HAP-1 (cell line): ENCODE measurements at regions of chr11 and their contacts with region 1.

Region 1: DNA sequence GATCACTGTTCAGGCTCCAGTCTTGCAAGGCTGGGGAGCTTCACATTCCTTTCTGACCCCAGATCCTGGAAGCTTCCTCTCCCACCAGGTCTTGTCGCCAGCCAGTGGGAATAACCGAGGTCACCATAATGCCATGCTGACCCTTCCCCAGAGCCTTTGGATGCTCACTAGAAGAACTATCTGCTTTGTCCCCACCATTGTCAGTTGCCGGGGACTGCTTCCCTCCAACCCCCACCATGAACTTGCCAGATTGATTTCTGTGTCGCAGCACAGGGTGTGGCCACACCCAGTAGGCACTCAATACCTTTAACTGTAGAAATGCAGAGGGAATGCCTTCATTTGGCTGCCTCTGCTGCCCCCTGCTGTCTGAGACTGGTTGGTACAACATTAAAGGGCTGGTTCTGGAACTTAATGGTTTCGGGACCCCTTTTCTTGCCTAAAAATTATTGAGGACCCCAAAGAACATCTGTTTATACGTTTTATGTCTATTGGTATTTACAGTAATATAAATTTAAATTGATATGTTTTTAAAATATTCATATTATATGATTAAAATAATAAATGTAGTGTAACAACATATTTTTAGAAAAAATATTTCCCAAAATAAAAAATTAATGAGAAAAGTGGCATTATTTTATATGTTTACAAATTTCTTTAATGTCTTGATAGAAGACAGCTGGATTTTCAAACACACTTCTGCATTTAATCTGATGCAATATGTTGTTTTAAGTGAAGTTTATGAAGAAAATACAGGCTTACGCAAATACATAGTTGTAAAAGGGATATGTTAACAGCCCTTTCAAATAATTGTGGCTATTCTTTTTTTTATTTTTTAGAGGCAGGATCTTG is 6.7 kb upstream of the GDPD5 start:
- DNase-seq: peak; percentile 86 to 89
- H3K4me3 ChIP-seq: no peak overlapping the region
- H3K4me1 ChIP-seq: peaks cover 13% of the 10 kb centered on the region
- H3K27me3 ChIP-seq: no peaks in the 10 kb centered on the region

Region 2: GRCh38 chr11:75270896-75271418 is 261.5 kb before region 1 on chr11:
- in situ Hi-C with region 1: loop called (anchors 10 kb)
- DNase-seq: no peak
- H3K4me3 ChIP-seq: no peak overlapping the region
- H3K4me1 ChIP-seq: no peaks in the 10 kb centered on the region
- H3K27me3 ChIP-seq: no peaks in the 10 kb centered on the region

Region 3: GRCh38 chr11:75445315-75445953 is 87.0 kb before region 1 on chr11:
- in situ Hi-C with region 1: loop called (anchors 5 kb)
- DNase-seq: peak; percentile 37 to 86
- H3K4me3 ChIP-seq: no peak overlapping the region
- H3K4me1 ChIP-seq: no peaks in the 10 kb centered on the region
- H3K27me3 ChIP-seq: no peaks in the 10 kb centered on the region